Pancreas (tissue), 10 donors: ENCODE measurements at regions of chr3 and their contacts with region 1.

Region 1: GRCh38 chr3:48548729-48549705 is 7.6 kb downstream of the PFKFB4 start:
- DNase-seq: peak; percentile 58 to 91 (median 80)
- ATAC-seq: peak; percentile 49 to 83 (median 72)
- H3K4me3 ChIP-seq: no peak overlapping the region
- H3K27ac ChIP-seq: no peak overlapping the region
- H3K4me1 ChIP-seq: peaks cover 28 to 36% (median 32%) of the 10 kb centered on the region in 3 donors
- H3K27me3 ChIP-seq: no peaks in the 10 kb centered on the region
- CTCF ChIP-seq: peak; percentile 82 to 94 (median 92)

Region 2: GRCh38 chr3:46646700-46647099 is 1902.3 kb before region 1 on chr3:
- intact Hi-C with region 1: no loop called
- DNase-seq: no peak
- ATAC-seq: no peak
- H3K4me3 ChIP-seq: no peak overlapping the region
- H3K27ac ChIP-seq: no peak overlapping the region
- H3K4me1 ChIP-seq: no peaks in the 10 kb centered on the region
- H3K27me3 ChIP-seq: no peaks in the 10 kb centered on the region
- CTCF ChIP-seq: no peak

Region 3: DNA sequence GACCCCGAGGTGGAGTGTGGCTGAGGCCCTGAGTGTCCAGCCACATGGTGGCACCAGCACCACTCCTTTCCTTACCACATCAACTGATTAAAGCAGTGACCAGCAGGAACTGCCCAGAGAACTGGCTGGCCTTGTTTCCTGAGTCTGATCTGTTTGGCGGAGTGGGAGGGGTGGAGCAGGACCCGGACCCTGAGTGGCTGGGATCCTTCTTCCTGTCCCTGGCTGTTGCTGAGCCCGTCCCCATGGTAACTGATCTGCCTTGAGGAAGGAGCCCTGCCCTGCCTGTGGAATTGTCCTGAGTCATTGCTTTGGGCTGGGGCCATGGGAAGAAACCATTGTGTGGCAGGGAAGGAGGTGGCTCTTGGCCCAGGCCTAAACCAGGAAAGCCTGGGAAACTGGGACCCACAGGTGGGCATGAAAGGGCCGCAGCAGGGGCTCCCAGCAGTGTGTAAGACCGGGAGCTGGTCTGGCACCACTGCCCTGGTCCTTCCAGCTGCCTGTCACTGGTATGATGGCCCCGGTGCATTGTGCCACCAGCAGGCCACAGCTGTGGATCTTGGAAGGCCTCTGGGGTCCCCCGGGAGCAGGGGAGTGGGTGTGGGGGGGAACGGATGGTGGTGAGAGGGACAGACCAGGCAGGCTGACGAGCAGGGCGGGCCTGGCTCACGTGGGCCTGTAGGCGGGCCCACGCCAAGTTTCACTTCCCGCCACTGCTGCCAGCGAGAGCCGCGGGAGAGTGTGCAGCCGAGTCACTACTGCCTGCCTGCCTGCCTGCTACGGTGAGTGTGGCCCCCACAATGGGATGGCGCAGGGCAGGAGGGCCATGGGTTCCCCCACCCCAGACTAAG is 83.3 kb before region 1 on chr3:
- intact Hi-C with region 1: loop called in 2 of 3 experiments (anchors 5 kb)
- DNase-seq: peak; percentile 90 to 100 (median 98)
- ATAC-seq: peak; percentile 89 to 95 (median 92)
- H3K4me3 ChIP-seq: peak overlapping the region; percentile 12 to 54 (median 38)
- H3K27ac ChIP-seq: peak overlapping the region; percentile 99 to 100 (median 100)
- H3K4me1 ChIP-seq: peaks cover 22 to 35% (median 27%) of the 10 kb centered on the region in 3 donors
- H3K27me3 ChIP-seq: no peaks in the 10 kb centered on the region
- CTCF ChIP-seq: peak in 3 of 4 donors; percentile 50 to 57 (median 51)

Region 4: GRCh38 chr3:48478596-48479555 is 70.1 kb before region 1 on chr3:
- intact Hi-C with region 1: loop called in 1 of 3 experiments (anchors 5 kb)
- DNase-seq: peak in 1 of 6 donors; percentile 41
- ATAC-seq: no peak
- H3K4me3 ChIP-seq: no peak overlapping the region
- H3K27ac ChIP-seq: no peak overlapping the region
- H3K4me1 ChIP-seq: no peaks in the 10 kb centered on the region
- H3K27me3 ChIP-seq: no peaks in the 10 kb centered on the region
- CTCF ChIP-seq: no peak